Dorsolateral prefrontal cortex (tissue), 120 donors: ENCODE measurements at regions of chr14 and their contacts with region 1.

Region 1: GRCh38 chr14:81170104-81170828 is 50.5 kb downstream of the GTF2A1 start:
- DNase-seq: peak; percentile 91 to 97 (median 96)
- H3K4me3 ChIP-seq: peak overlapping the region; percentile 58 to 95 (median 81)
- H3K27ac ChIP-seq: peak overlapping the region; percentile 85 to 100 (median 97)
- H3K27me3 ChIP-seq: no peaks in the 10 kb centered on the region
- CTCF ChIP-seq: peak; percentile 71 to 99 (median 90)

Region 2: GRCh38 chr14:80954687-80955299 is 215.5 kb before region 1 on chr14:
- intact Hi-C with region 1: loop called (anchors 1 to 5 kb)
- DNase-seq: peak; percentile 53 to 85 (median 71)
- H3K4me3 ChIP-seq: peak overlapping the region; percentile 31 to 90 (median 64)
- H3K27ac ChIP-seq: no peak overlapping the region
- H3K27me3 ChIP-seq: no peaks in the 10 kb centered on the region
- CTCF ChIP-seq: peak; percentile 47 to 94 (median 86)

Region 3: GRCh38 chr14:80996049-80996901 is 174.0 kb before region 1 on chr14:
- intact Hi-C with region 1: loop called (anchors 5 kb)
- DNase-seq: peak in 3 of 10 donors; percentile 7 to 28 (median 9)
- H3K4me3 ChIP-seq: peak overlapping the region in 21 of 59 donors; percentile 3 to 48 (median 24)
- H3K27ac ChIP-seq: no peak overlapping the region
- H3K27me3 ChIP-seq: peaks cover 0 to 12% (median 0%) of the 10 kb centered on the region in 45 donors
- CTCF ChIP-seq: peak; percentile 48 to 83 (median 69)

Region 4: GRCh38 chr14:81211844-81212243 is 41.6 kb after region 1 on chr14:
- intact Hi-C with region 1: loop called in 1 of 2 experiments (anchors 5 kb)
- DNase-seq: peak in 4 of 10 donors; percentile 41 to 68 (median 52)
- H3K4me3 ChIP-seq: no peak overlapping the region
- H3K27ac ChIP-seq: peak overlapping the region in 5 of 59 donors; percentile 5 to 44 (median 18)
- H3K27me3 ChIP-seq: no peaks in the 10 kb centered on the region
- CTCF ChIP-seq: peak in 54 of 56 donors; percentile 26 to 76 (median 56)

Region 5: DNA sequence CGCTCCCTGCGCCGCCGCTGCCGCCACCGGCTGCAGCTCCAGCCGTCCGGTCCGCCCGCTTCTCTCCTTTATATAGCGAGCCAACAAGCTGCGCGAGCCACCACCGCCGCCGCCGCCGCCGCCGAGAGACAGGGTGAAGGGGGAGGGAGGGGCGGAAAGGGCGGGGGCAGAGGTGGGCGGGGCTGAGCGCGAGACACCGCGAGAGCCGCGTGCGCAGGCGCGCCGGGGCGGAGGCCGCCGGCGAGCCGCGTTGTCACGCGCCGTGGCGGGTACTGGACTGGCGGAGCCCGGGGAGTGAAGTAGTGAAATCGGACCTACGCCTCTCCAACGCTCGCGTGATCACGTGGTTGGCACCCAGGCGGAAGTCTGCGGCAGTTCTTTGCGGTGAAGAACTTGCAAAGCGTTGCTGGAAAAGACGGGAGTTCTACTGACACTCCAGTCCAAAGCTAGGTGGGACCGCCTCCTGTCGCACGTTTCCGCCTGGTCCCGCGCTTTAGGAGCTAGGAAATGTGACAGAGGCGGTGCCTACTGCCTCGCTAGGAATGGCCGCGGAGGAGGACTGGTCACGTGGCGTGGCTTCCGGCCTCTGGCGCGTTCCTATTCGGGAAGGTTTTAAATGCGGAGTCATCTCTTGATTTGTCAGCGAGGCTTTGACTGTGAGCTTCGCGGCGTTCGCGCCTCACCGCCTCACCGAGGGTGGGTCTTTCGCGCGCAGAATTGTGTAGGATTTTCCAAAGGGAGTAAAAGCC is 50.7 kb after region 1 on chr14 and contains the start of gene GTF2A1:
- intact Hi-C with region 1: loop called in 1 of 2 experiments (anchors 2 kb)
- DNase-seq: peak; percentile 84 to 97 (median 94)
- H3K4me3 ChIP-seq: peak within 1 kb of the TSS; percentile 62 to 96 (median 83)
- H3K27ac ChIP-seq: peak within 1 kb of the TSS; percentile 96 to 100 (median 99)
- H3K27me3 ChIP-seq: no peaks in the 10 kb centered on the region
- CTCF ChIP-seq: peak in 15 of 56 donors; percentile 3 to 37 (median 23)
- total RNA-seq, gene GTF2A1: 28.5 to 73.1 (median 53.1) TPM